Activated CD4-positive, alpha-beta T cell treated with anti-CD3 and anti-CD28 coated beads, Interleukin-2, amount 10 ng/mL, durations not matched to agents 24 days and 14 days (primary cell): ENCODE measurements at regions of chr2 and their contacts with region 1.

Region 1: DNA sequence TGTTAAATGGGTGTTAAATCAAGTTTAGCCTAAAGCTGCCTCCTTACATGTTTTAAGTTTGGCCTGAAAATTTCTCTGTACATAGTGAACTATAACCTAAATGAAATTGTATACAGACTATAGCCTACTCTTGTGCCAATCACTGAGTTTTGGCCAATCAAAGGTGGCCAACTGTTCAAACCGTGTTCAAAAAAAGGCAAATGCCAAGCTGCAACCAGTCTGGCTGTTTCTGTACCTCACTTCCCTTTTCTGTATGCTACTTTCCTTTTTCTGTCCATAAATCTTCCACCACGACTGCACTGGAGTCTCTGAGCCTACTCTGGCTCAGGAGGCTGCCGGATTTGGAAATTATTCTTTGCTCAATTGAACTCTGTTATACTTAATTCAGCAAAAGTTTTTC is 121.0 kb downstream of the SPOPL start:
- DNase-seq: no peak
- H3K4me3 Mint-ChIP-seq: no peak overlapping the region
- H3K27ac Mint-ChIP-seq: no peak overlapping the region
- H3K4me1 Mint-ChIP-seq: no peaks in the 10 kb centered on the region
- H3K27me3 Mint-ChIP-seq: no peaks in the 10 kb centered on the region

Region 2: DNA sequence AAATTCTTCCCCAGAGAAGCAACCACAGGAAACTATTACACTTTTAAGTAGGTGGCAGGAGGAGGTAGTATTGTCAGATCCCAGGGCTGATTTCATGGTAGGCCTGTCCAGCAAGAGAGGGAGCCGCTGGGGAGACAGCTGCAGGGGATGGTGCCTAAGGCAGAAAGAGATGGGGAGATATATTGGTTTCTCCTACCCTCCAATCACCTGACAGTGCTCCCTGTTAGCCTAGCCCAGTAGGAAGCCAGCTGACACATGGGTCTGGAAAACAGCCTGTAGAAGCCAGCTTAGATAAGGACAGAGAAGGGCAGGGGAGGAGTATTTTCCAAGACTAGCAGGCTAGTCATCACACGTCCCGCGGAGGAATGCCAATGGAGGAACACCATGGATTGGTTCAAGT is 129.3 kb before region 1 on chr2:
- intact Hi-C with region 1: loop called (anchors 10 kb)
- DNase-seq: no peak
- H3K4me3 Mint-ChIP-seq: no peak overlapping the region
- H3K27ac Mint-ChIP-seq: no peak overlapping the region
- H3K4me1 Mint-ChIP-seq: peaks cover 6% of the 10 kb centered on the region
- H3K27me3 Mint-ChIP-seq: no peaks in the 10 kb centered on the region

Region 3: GRCh38 chr2:138676619-138677032 is 54.0 kb after region 1 on chr2:
- intact Hi-C with region 1: no loop called
- DNase-seq: no peak
- H3K4me3 Mint-ChIP-seq: no peak overlapping the region
- H3K27ac Mint-ChIP-seq: no peak overlapping the region
- H3K4me1 Mint-ChIP-seq: no peaks in the 10 kb centered on the region
- H3K27me3 Mint-ChIP-seq: no peaks in the 10 kb centered on the region